ENCODE measurements at regions of chr6 and their contacts with region 1.

Region 1: GRCh38 chr6:30396833-30397479 is 52.0 kb downstream of the RPP21 start:
- DNase-seq: peak; percentile 32
- H3K4me3 ChIP-seq: no peak overlapping the region
- H3K27ac ChIP-seq: no peak overlapping the region
- H3K4me1 ChIP-seq: peaks cover 4% of the 10 kb centered on the region
- H3K27me3 ChIP-seq: peaks cover 2% of the 10 kb centered on the region
- CTCF ChIP-seq: peak; percentile 70 to 90

Region 2: DNA sequence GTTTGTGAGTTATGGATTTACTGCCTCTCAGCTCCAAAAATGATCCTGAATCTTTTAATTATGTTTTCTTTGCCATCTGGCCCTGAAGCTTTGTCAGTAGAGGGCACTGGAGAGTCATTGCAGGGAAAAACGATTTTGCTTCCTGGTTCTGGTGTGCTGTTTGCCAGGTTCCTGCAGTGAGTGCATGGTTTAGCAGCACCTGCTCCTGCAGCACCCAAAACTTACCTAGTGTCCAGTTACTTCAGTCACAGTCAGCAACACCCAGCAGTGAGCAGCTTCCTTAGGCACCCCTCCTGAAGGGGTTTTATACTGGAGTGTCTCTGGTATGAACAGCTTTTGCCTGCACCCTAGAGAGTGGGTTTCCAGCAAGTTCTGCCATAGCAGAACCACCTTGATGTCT is 177.7 kb before region 1 on chr6:
- CTCF ChIA-PET with region 1: no interaction called
- dilution Hi-C with region 1: no loop called
- in situ Hi-C with region 1: no loop called
- intact Hi-C with region 1: loop called (anchors 1 kb)
- DNase-seq: peak; percentile 50
- H3K4me3 ChIP-seq: no peak overlapping the region
- H3K27ac ChIP-seq: no peak overlapping the region
- H3K4me1 ChIP-seq: peaks cover under 1% of the 10 kb centered on the region
- H3K27me3 ChIP-seq: no peaks in the 10 kb centered on the region
- CTCF ChIP-seq: peak; percentile 92 to 96

Region 3: DNA sequence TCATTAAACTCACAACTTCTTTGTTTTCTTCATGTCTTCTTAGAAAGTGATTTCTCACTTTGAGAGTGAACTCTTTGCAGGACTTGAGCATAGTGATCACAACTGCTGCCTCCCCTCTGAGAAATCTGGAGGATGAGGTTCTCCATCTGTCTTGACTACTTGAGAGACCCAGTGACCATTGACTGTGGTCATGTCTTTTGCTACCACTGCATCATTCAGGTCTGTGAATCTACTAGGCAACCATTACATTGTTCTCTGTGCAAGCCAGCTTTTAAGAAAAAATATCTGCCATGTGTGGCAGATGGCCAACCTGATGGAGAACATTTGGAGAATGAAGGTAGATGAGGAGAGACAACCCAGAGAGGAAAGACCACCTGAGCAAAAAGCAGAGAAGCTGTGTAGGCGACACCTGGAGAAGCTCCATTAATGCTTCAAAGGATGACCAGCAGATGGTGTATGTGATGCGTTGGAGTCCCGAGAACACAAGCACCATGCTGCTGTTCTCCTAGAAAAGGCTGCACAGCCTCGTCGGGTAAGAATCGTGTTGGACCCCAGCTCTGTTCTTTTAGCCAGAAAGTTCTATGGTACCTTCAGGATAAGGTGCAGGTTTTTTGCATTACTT is 158.7 kb before region 1 on chr6:
- CTCF ChIA-PET with region 1: no interaction called
- dilution Hi-C with region 1: no loop called
- in situ Hi-C with region 1: no loop called
- intact Hi-C with region 1: loop called (anchors 1 kb)
- DNase-seq: no peak
- H3K4me3 ChIP-seq: no peak overlapping the region
- H3K27ac ChIP-seq: no peak overlapping the region
- H3K4me1 ChIP-seq: no peaks in the 10 kb centered on the region
- H3K27me3 ChIP-seq: no peaks in the 10 kb centered on the region
- CTCF ChIP-seq: peak in 1 of 2 donors; percentile 34

Region 4: GRCh38 chr6:30357678-30358540 is 39.0 kb before region 1 on chr6:
- CTCF ChIA-PET with region 1: no interaction called
- dilution Hi-C with region 1: no loop called
- in situ Hi-C with region 1: no loop called
- intact Hi-C with region 1: loop called (anchors 1 kb)
- DNase-seq: peak; percentile 44
- H3K4me3 ChIP-seq: peak overlapping the region; percentile 39 to 52 (median 47)
- H3K27ac ChIP-seq: no peak overlapping the region
- H3K4me1 ChIP-seq: peaks cover 6% of the 10 kb centered on the region
- H3K27me3 ChIP-seq: peaks cover 10% of the 10 kb centered on the region
- CTCF ChIP-seq: peak; percentile 63 to 77